HEK293 (cell line): ENCODE measurements at regions of chr18 and their contacts with region 1.

Region 1: DNA sequence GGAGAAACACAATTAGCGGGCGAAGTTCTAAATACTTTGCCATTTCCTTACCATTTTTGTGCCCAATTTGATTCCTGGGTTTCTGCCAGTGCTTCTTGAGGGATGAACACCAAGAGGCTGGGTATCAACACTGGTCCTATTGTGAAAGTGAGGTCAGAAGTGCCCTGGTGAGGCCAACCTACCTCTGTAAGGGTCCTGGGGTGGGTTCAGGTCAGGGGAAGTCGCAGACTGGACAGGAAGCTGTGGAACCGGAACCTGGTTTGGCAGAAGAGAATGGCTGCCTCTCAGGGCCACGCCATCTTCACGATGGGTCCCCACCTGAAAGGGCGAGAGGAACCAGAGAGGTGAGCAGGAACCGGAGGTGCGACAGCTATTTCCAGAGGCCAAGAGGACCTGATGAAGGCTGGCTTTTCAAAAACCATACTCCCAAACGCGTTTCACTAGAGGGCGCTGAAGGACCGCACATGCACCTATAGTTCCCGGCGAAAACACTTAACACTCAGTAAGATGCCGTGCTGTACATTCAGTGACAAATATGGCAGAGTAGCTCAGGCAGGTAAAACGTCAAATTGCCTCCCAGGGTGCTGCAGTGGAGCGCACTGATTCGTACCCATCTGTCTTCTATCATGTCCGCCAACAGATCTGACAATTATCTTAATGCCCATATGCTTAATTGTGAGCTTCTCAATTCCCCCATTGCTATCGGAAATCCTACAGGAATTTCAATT is 275.3 kb upstream of the CCDC68 start:
- H3K4me3 ChIP-seq: no peak overlapping the region
- H3K27ac ChIP-seq: no peak overlapping the region
- H3K4me1 ChIP-seq: peaks cover 3% of the 10 kb centered on the region
- CTCF ChIP-seq: peak; percentile 82; the same call in 1 of the 2 replicates

Region 2: DNA sequence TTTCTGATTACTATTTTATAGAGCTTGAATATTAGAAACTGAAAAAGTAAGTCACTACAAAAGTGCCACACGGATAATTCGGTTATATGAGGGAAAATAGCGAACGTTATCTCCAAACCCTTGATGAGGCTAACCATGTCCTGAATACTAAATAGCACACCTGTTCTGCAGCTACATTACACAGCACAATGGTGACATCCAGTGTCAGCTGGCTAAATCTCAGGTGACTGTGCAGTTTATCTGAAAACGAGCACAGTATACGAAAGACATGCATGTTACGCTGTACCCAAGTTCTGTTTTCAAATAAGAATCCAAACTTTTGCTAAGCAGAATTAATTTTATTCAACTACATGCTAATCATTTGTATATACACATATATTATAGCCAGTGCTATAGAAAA is 284.3 kb before region 1 on chr18:
- CTCF ChIA-PET with region 1: no interaction called
- POLR2A ChIA-PET with region 1: no interaction called
- H3K4me3 ChIP-seq: no peak overlapping the region
- H3K27ac ChIP-seq: no peak overlapping the region
- H3K4me1 ChIP-seq: peaks cover 26% of the 10 kb centered on the region
- CTCF ChIP-seq: no peak

Region 3: GRCh38 chr18:55251254-55251971 is 16.9 kb after region 1 on chr18:
- CTCF ChIA-PET with region 1: interaction called, 16 read pairs
- POLR2A ChIA-PET with region 1: no interaction called
- H3K4me3 ChIP-seq: no peak overlapping the region
- H3K27ac ChIP-seq: peak overlapping the region; percentile 18; the same call in 1 of the 2 replicates
- H3K4me1 ChIP-seq: peaks cover 9% of the 10 kb centered on the region
- CTCF ChIP-seq: no peak

Region 4: DNA sequence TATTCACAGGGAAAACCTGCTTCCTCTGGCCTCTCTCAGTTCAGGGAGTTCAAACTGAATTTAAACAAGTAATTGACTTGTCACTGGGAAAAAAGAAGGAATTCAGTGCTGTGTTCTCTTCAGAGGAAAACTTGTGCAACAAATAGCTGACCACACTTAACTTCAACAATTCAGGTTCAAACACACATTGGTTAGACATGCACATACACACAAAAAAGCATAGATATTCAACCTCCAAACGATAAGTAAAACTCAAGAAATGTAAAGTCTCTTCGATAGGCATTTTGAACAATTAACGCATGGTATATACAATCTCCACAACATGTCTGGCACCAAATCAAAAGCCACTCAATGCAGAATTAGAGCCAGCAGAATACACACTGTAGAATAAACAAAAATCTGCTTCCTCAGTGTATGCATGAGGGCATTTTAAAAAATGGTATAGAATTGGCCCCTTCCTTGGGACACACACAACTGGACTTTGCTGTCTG is 84.5 kb after region 1 on chr18:
- CTCF ChIA-PET with region 1: interaction called, 13 read pairs
- POLR2A ChIA-PET with region 1: interaction called, 4 read pairs
- H3K4me3 ChIP-seq: no peak overlapping the region
- H3K27ac ChIP-seq: peak overlapping the region; percentile 8; the same call in 1 of the 2 replicates
- H3K4me1 ChIP-seq: peaks cover 69% of the 10 kb centered on the region
- CTCF ChIP-seq: no peak

Region 5: DNA sequence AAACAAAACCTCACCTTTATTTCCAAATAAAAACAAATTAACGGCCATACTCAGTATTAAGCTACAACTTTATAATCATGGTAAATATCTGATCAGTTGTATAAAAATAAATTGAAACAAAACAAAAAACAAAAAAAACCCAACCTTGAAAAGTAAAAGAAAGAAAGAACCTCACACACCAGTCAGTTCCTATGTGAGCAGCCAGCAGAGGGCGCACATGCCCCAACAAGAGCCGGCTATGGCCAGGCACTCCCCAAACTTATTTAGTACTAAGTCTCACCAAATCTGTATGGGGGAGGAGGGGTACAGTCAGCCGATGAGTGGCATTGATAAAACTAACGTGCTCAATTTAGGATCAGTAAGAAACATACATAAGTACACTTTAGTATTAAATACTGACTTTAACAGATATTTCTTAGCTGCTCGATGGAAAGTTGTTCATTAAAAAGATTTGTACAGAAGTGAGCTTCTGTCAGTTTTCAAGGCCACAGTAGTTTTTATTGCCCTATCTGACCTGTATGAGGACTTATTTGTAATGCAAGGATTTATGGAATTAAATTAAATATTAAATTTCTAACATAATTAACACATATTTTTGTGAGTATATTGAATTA is 180.8 kb after region 1 on chr18:
- CTCF ChIA-PET with region 1: interaction called, 18 read pairs
- POLR2A ChIA-PET with region 1: no interaction called
- H3K4me3 ChIP-seq: no peak overlapping the region
- H3K27ac ChIP-seq: no peak overlapping the region
- H3K4me1 ChIP-seq: peaks cover 10% of the 10 kb centered on the region; the same call in 1 of the 2 replicates
- CTCF ChIP-seq: peak; percentile 86

Region 6: GRCh38 chr18:56575819-56576663 is 1341.5 kb after region 1 on chr18:
- CTCF ChIA-PET with region 1: interaction called, 25 read pairs
- POLR2A ChIA-PET with region 1: no interaction called
- H3K4me3 ChIP-seq: no peak overlapping the region
- H3K27ac ChIP-seq: no peak overlapping the region
- H3K4me1 ChIP-seq: no peaks in the 10 kb centered on the region
- CTCF ChIP-seq: no peak